ENCODE measurements at regions of chr11 and their contacts with region 1.

Region 1: GRCh38 chr11:18105802-18106574 is at the start of gene SAAL1:
- DNase-seq: peak; percentile 93
- H3K4me3 ChIP-seq: peak within 1 kb of the TSS; percentile 99
- H3K27ac ChIP-seq: peak within 1 kb of the TSS; percentile 33
- H3K4me1 ChIP-seq: peaks cover 34% of the 10 kb centered on the region
- CTCF ChIP-seq: peak; percentile 92
- total RNA-seq, gene SAAL1: 32.2 and 40.0 TPM in 2 replicates

Region 2: DNA sequence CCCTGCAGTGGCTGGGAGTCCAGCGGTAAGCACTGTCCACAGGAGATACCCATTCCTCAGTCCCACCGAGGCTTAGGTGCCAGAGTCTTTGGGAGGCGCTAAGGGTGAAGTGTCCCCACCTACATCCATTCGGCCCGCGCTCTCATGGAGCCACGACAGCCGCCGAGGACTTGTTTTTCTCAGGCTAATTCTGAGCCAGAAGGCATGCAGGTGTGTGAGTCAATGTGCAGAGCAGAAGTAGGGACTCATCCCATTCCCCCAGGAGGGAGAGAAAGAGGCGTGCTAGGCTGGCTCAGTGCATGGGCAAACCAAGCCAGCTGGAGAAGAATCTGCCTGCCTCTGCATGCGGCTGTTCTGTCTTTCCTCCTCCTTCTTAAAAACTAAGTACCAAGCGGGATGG is 324.8 kb before region 1 on chr11:
- CTCF ChIA-PET with region 1: no interaction called
- POLR2A ChIA-PET with region 1: no interaction called
- intact Hi-C with region 1: no loop called
- DNase-seq: no peak
- H3K4me3 ChIP-seq: no peak overlapping the region
- H3K27ac ChIP-seq: no peak overlapping the region
- H3K4me1 ChIP-seq: no peaks in the 10 kb centered on the region
- CTCF ChIP-seq: no peak

Region 3: GRCh38 chr11:17991783-17992433 is 114.1 kb before region 1 on chr11:
- CTCF ChIA-PET with region 1: no interaction called
- POLR2A ChIA-PET with region 1: no interaction called
- intact Hi-C with region 1: loop called (anchors 1 kb)
- DNase-seq: peak; percentile 68
- H3K4me3 ChIP-seq: no peak overlapping the region
- H3K27ac ChIP-seq: no peak overlapping the region
- H3K4me1 ChIP-seq: peaks cover 11% of the 10 kb centered on the region
- CTCF ChIP-seq: peak; percentile 99

Region 4: GRCh38 chr11:18012863-18013781 is 92.9 kb before region 1 on chr11 and contains the start of gene SERGEF:
- CTCF ChIA-PET with region 1: no interaction called
- POLR2A ChIA-PET with region 1: interaction called, 11 read pairs
- intact Hi-C with region 1: loop called (anchors 5 kb)
- DNase-seq: peak; percentile 95
- H3K4me3 ChIP-seq: peak within 1 kb of the TSS; percentile 76
- H3K27ac ChIP-seq: peak within 1 kb of the TSS; percentile 42
- H3K4me1 ChIP-seq: peaks cover 25% of the 10 kb centered on the region
- CTCF ChIP-seq: no peak
- total RNA-seq, gene SERGEF: 35.4 and 47.1 TPM in 2 replicates

Region 5: GRCh38 chr11:18235394-18236334 is 129.7 kb after region 1 on chr11:
- CTCF ChIA-PET with region 1: no interaction called
- POLR2A ChIA-PET with region 1: no interaction called
- intact Hi-C with region 1: loop called (anchors 2 kb)
- DNase-seq: no peak
- H3K4me3 ChIP-seq: no peak overlapping the region
- H3K27ac ChIP-seq: no peak overlapping the region
- H3K4me1 ChIP-seq: peaks cover 27% of the 10 kb centered on the region
- CTCF ChIP-seq: no peak

Region 6: DNA sequence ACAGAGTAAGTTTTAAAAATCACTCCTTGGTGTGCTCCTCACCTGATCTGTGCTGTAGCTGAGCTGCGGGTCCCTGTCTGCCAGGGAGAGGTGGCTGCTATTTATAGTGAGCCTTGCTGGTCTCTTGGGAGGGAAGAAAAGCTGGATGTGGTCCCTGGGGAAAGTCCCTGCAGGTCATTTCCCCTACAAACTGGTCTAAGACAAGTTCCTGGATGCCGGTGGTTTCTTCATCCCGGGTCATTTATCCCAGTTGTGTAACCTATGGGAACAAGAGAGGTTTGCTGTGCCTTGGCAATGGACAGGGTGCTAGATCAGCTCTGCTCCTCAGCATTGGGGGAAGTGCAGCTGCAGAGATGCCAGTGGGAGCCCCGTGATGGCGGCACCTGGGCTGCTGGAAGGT is 142.6 kb after region 1 on chr11 and contains the start of gene SAA2:
- CTCF ChIA-PET with region 1: no interaction called
- POLR2A ChIA-PET with region 1: no interaction called
- intact Hi-C with region 1: no loop called
- DNase-seq: no peak
- H3K4me3 ChIP-seq: no peak within 1 kb of the TSS
- H3K27ac ChIP-seq: no peak within 1 kb of the TSS
- H3K4me1 ChIP-seq: peaks cover 21% of the 10 kb centered on the region
- CTCF ChIP-seq: no peak
- total RNA-seq, gene SAA2: not detected in 2 replicates

Measured in OCI-LY7 (cell line).